ENCODE measurements at regions of chr11 and their contacts with region 1.

Region 1: GRCh38 chr11:75547580-75548058 is 14.4 kb upstream of the SERPINH1 start:
- DNase-seq: peak in 7 of 10 donors; percentile 43 to 91 (median 68)

Region 2: GRCh38 chr11:75577207-75577606 is 29.6 kb after region 1 on chr11:
- intact Hi-C with region 1: loop called (anchors 1 kb)
- DNase-seq: peak in 5 of 10 donors; percentile 41 to 81 (median 66)

Region 3: DNA sequence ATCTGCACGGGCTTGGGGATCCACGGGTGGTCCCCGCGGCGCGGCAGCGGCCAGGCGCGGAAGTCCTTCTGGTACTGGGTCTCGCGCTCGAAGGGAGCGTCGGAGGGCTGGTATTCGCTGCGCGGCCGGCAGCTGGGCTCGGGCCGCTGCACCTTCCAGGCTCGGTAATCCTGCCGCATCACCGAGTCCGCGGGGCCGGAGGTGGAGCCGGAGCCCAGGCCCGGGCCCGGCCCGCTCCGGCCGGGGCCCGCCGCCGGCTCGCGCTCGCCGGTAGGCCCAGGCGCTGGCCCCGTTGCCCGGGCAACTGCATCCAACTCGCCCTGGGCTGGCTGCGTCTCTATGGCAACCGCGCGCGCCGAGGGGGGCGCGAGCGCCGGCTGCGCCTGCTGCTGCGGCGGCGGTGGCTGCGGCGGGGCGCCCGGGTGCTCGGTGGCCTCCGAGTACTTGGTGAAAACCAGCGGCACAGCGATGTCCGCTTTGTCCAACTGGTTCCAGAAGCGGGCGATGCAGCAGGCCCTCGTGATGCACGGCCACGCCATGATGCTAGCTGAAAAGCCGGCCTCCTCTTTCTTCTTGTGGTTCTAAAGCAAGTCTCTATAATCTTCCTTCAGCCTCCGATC is 120.3 kb after region 1 on chr11:
- intact Hi-C with region 1: no loop called
- DNase-seq: peak; percentile 66 to 96 (median 78)

Region 4: GRCh38 chr11:75768112-75768908 is 220.7 kb after region 1 on chr11 and contains the start of gene DGAT2:
- intact Hi-C with region 1: loop called (anchors 5 kb)
- DNase-seq: peak; percentile 35 to 95 (median 68)

Region 5: DNA sequence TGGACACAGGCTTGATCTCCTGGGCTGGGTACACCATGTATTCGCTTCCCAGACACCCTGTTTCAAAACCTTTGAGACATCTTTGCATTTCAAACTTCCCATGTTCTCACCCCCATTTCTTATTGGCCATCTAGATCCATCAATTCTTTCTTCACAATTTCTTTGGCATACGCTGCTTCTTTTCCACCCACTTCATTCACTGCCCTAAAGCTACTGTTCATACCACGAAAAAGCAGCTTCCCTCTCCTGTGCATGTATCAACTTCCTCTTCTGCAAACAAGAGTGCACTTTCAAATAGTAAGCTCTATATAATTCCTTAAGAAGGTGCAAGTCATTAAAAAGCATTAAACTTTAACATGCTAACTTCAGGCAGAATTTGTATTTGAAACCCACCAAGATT is 288.8 kb after region 1 on chr11:
- intact Hi-C with region 1: no loop called
- DNase-seq: no peak

Measured in posterior cingulate gyrus (tissue), 11 donors.